Esophagus muscularis mucosa (tissue), 4 donors: ENCODE measurements at regions of chr18 and their contacts with region 1.

Region 1: DNA sequence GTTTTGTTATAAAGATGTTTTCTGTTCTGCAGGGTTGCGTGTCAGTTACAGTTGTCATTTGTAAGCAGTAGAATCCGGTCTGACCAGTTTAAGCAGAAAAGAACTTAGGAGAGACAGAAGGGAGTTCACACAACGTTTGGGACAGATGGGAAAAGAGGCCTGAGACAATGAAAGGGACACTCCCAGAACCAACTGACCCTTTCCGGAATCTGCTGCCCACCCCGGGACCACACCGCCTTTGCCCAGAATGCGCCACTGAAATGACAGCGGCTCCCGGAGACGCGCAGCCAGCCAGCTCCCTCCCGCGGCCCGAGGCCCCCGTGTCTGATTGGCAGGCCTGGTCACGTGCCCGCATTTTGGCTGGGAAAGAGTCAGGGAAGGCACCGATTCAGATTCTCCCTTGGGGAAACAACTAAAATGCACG is 244.6 kb downstream of the BCL2 start:
- DNase-seq: peak; percentile 96
- H3K4me3 ChIP-seq: peak overlapping the region; percentile 52 to 63 (median 56)
- H3K27ac ChIP-seq: peak overlapping the region; percentile 32 to 64 (median 64)
- H3K4me1 ChIP-seq: peaks cover 0 to 7% (median 6%) of the 10 kb centered on the region in 4 donors
- H3K27me3 ChIP-seq: no peaks in the 10 kb centered on the region
- CTCF ChIP-seq: no peak
- EP300 ChIP-seq: no peak
- POLR2A ChIP-seq: no peak

Region 2: GRCh38 chr18:62939433-62939832 is 135.6 kb before region 1 on chr18:
- intact Hi-C with region 1: no loop called
- DNase-seq: no peak
- H3K4me3 ChIP-seq: peak overlapping the region in 2 of 4 donors; percentile 10 to 17
- H3K27ac ChIP-seq: peak overlapping the region; percentile 60 to 75 (median 68)
- H3K4me1 ChIP-seq: peaks cover 19 to 44% (median 43%) of the 10 kb centered on the region in 4 donors
- H3K27me3 ChIP-seq: no peaks in the 10 kb centered on the region
- CTCF ChIP-seq: no peak
- EP300 ChIP-seq: no peak
- POLR2A ChIP-seq: no peak

Region 3: GRCh38 chr18:63119647-63120046 is 44.7 kb after region 1 on chr18:
- intact Hi-C with region 1: loop called (anchors 5 kb)
- DNase-seq: no peak
- H3K4me3 ChIP-seq: no peak overlapping the region
- H3K27ac ChIP-seq: no peak overlapping the region
- H3K4me1 ChIP-seq: peaks cover 0 to 11% (median 3%) of the 10 kb centered on the region in 4 donors
- H3K27me3 ChIP-seq: peaks cover 0 to 2% (median 0%) of the 10 kb centered on the region in 4 donors
- CTCF ChIP-seq: peak; percentile 31 to 46 (median 41)
- EP300 ChIP-seq: no peak
- POLR2A ChIP-seq: no peak

Region 4: GRCh38 chr18:63138436-63139340 is 63.7 kb after region 1 on chr18:
- intact Hi-C with region 1: no loop called
- DNase-seq: no peak
- H3K4me3 ChIP-seq: peak overlapping the region in 3 of 4 donors; percentile 3 to 29 (median 17)
- H3K27ac ChIP-seq: no peak overlapping the region
- H3K4me1 ChIP-seq: peaks cover 23 to 44% (median 41%) of the 10 kb centered on the region in 4 donors
- H3K27me3 ChIP-seq: no peaks in the 10 kb centered on the region
- CTCF ChIP-seq: no peak
- EP300 ChIP-seq: no peak
- POLR2A ChIP-seq: no peak